Activated CD4-positive, alpha-beta T cell treated with anti-CD3 and anti-CD28 coated beads for 36 hours (primary cell): ENCODE measurements at regions of chr16 and their contacts with region 1.

Region 1: GRCh38 chr16:2486645-2487516 is 12.0 kb downstream of the TBC1D24 start:
- DNase-seq: peak; percentile 90
- ATAC-seq: peak; percentile 99
- H3K4me3 Mint-ChIP-seq: peak overlapping the region; percentile 51
- H3K27ac Mint-ChIP-seq: peak overlapping the region; percentile 70
- H3K4me1 Mint-ChIP-seq: peaks cover 14% of the 10 kb centered on the region
- H3K27me3 Mint-ChIP-seq: no peaks in the 10 kb centered on the region

Region 2: DNA sequence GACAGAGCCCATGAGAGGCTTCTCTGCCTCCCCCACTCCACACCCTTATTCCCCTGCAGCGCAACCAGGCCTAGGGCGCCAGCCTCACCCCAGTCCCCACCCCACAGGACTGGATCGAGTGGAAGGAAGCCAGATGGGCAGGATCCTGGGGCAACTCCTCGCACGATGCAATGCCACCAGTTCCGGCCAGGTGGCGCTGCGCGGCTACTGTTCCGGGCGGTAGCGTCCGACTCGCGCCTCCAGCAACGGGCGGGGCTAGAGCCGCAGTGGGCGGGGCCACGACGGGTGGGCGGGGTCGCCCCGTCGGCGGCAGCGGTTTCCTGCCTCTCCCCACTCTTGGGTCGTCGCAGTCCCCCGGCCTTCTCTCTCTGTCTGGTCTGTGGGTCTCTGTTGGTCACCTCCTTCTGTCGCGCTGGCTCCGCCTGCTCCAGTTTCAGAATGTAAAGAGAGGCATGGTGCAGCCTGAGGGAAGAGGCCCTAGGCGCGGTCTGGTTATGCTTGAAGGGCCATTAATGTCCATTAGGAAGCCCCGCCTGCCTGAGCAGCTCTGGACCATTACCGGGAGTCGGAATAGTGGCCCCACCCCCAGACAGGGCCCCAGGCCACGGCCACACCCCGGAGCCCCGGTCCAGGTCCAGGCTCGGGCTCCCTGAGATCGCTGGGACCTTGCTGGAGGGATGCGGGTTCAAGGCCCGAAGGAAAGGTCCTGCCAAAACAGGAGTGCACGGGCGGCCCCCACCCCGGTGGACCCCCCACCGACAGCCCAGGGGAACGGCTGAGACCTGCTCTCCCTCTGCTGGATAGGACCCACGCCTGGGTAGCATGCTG is 463.6 kb before region 1 on chr16:
- CTCF ChIA-PET with region 1: no interaction called
- POLR2A ChIA-PET with region 1: no interaction called
- intact Hi-C with region 1: loop called in 1 of 2 experiments (anchors 10 kb)
- DNase-seq: peak; percentile 97
- ATAC-seq: peak; percentile 86
- H3K4me3 Mint-ChIP-seq: peak overlapping the region; percentile 46
- H3K27ac Mint-ChIP-seq: no peak overlapping the region
- H3K4me1 Mint-ChIP-seq: peaks cover 15% of the 10 kb centered on the region
- H3K27me3 Mint-ChIP-seq: peaks cover 27% of the 10 kb centered on the region

Region 3: GRCh38 chr16:2194852-2195321 is 292.0 kb before region 1 on chr16:
- CTCF ChIA-PET with region 1: interaction called, 4 read pairs
- POLR2A ChIA-PET with region 1: no interaction called
- intact Hi-C with region 1: loop called in 1 of 2 experiments (anchors 5 kb)
- DNase-seq: peak; percentile 74
- ATAC-seq: peak; percentile 87
- H3K4me3 Mint-ChIP-seq: peak overlapping the region; percentile 26
- H3K27ac Mint-ChIP-seq: no peak overlapping the region
- H3K4me1 Mint-ChIP-seq: peaks cover 5% of the 10 kb centered on the region
- H3K27me3 Mint-ChIP-seq: peaks cover 23% of the 10 kb centered on the region

Region 4: GRCh38 chr16:2459647-2460390 is 27.1 kb before region 1 on chr16 and contains the start of gene TEDC2:
- CTCF ChIA-PET with region 1: no interaction called
- POLR2A ChIA-PET with region 1: no interaction called
- intact Hi-C with region 1: loop called in 1 of 2 experiments (anchors 1 kb)
- DNase-seq: peak; percentile 99
- ATAC-seq: peak; percentile 98
- H3K4me3 Mint-ChIP-seq: peak within 1 kb of the TSS; percentile 73
- H3K27ac Mint-ChIP-seq: peak within 1 kb of the TSS; percentile 67
- H3K4me1 Mint-ChIP-seq: peaks cover 6% of the 10 kb centered on the region
- H3K27me3 Mint-ChIP-seq: no peaks in the 10 kb centered on the region
- total RNA-seq, gene TEDC2: 21.0 to 23.1 TPM

Region 5: DNA sequence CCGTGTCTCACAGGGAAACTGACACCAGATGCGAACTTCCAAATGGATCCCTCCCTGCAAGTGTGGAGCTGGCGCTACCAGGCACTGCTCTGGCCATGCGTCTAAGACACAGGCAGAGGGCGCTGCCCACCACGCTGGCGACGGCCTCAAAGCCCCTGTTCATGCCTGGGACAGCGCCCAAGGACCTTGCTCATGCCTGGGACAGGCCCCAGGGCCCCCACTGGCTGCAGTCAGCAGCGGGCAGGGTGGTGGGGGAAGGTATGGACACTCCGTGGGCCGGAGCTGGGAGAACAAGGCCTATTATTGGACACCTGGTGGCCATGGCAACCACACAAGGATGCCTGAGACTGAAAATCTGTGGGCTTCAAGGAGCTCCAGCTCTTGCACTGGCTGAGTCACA is 352.0 kb after region 1 on chr16:
- CTCF ChIA-PET with region 1: no interaction called
- POLR2A ChIA-PET with region 1: no interaction called
- intact Hi-C with region 1: no loop called
- DNase-seq: peak; percentile 77
- ATAC-seq: peak; percentile 67
- H3K4me3 Mint-ChIP-seq: no peak overlapping the region
- H3K27ac Mint-ChIP-seq: no peak overlapping the region
- H3K4me1 Mint-ChIP-seq: peaks cover 31% of the 10 kb centered on the region
- H3K27me3 Mint-ChIP-seq: peaks cover 3% of the 10 kb centered on the region